HEK293T (cell line): ENCODE measurements at regions of chr1 and their contacts with region 1.

Region 1: GRCh38 chr1:157156058-157156541 is 17.9 kb upstream of the ETV3 start:
- DNase-seq: peak; percentile 89

Region 2: DNA sequence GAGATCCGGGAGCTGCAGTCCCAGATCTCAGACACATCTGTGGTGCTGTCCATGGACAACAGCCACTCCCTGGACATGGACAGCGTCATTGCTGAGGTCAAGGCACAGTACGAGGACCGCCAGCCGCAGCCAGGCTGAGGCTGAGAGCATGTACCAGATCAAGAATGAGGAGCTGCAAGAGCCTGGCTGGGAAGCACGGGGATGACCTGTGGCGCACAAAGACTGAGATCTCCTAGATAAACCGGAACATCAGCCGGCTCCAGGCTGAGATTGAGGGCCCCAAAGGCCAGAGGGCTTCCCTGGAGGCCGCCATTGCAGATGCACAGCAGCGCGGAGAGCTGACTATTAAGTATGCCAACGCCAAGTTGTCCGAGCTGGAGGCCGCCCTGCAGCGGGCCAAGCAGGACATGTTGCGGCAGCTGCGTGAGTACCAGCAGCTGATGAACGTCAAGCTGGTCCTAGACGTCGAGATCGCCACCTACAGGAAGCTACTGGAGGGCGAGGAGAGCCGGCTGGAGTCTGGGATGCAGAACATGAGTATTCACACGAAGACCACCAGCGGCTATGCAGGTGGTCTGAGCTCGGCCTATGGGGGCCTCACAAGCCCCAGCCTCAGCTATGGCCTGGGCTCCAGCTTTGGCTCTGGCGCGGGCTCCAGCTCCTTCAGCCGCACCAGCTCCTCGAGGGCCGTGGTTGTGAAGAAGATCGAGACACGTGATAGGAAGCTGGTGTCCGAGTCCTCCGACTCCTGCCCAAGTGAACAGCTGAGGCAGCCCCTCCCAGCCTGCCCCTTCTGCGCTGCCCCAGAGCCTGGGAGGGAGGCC is 81.9 kb before region 1 on chr1:
- CTCF ChIA-PET with region 1: interaction called, 11 read pairs
- POLR2A ChIA-PET with region 1: no interaction called
- DNase-seq: peak; percentile 82

Region 3: GRCh38 chr1:157138220-157139051 is 17.7 kb before region 1 on chr1 and contains the start of gene ETV3:
- CTCF ChIA-PET with region 1: interaction called, 9 read pairs
- POLR2A ChIA-PET with region 1: interaction called, 22 read pairs
- DNase-seq: peak; percentile 95